Activated CD4-positive, alpha-beta T cell treated with anti-CD3 and anti-CD28 coated beads for 36 hours (primary cell): ENCODE measurements at regions of chr4 and their contacts with region 1.

Region 1: GRCh38 chr4:113761620-113762185 is at the start of gene CAMK2D:
- DNase-seq: peak; percentile 93
- ATAC-seq: peak; percentile 62
- H3K4me3 Mint-ChIP-seq: peak within 1 kb of the TSS; percentile 97
- H3K27ac Mint-ChIP-seq: peak within 1 kb of the TSS; percentile 98
- H3K4me1 Mint-ChIP-seq: peaks cover 46% of the 10 kb centered on the region
- H3K27me3 Mint-ChIP-seq: no peaks in the 10 kb centered on the region
- total RNA-seq, gene CAMK2D: 70.3 to 71.3 TPM

Region 2: DNA sequence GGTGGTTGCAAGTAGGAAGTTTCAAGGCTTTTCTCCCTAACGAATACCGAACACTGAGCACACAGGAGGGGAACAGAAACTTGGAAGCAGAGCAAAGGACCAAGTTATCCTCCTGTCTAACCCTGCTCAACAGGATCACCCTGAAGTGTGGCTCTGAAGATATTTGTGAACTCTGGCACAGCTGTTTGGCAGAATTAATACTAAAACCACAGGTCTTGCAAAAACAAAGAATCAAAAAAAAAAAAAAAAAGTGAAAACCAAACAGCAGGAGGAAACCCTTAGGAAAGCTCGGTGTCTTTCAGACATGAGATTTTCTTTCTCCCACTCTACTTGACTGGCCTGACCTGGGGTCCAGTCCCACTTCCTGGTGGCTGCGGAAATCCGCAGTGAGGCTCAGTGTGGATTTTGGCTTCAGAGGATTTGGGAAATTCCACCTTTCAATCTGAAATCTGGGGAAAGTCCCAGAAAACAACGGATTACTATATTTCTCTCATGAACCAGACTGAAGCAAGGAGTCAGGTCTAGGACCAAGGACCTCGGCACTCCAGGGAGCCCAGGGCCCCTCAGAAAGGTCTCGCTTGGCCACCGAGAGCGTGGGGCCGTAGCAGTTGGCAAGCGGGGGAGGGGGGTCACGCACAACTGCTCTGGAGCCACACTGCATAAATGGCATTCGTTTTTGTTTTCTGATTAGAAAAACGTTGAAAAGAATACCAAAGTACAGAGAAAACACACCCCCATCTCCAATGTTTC is 1476.9 kb before region 1 on chr4:
- CTCF ChIA-PET with region 1: no interaction called
- POLR2A ChIA-PET with region 1: no interaction called
- intact Hi-C with region 1: loop called in 1 of 2 experiments (anchors 10 kb)
- DNase-seq: peak; percentile 43
- ATAC-seq: no peak
- H3K4me3 Mint-ChIP-seq: peak overlapping the region; percentile 96
- H3K27ac Mint-ChIP-seq: peak overlapping the region; percentile 96
- H3K4me1 Mint-ChIP-seq: peaks cover 73% of the 10 kb centered on the region
- H3K27me3 Mint-ChIP-seq: no peaks in the 10 kb centered on the region

Region 3: GRCh38 chr4:113384600-113384999 is 377.1 kb before region 1 on chr4:
- CTCF ChIA-PET with region 1: no interaction called
- POLR2A ChIA-PET with region 1: no interaction called
- intact Hi-C with region 1: loop called in 1 of 2 experiments (anchors 2 kb)
- DNase-seq: peak; percentile 16
- ATAC-seq: peak; percentile 98
- H3K4me3 Mint-ChIP-seq: no peak overlapping the region
- H3K27ac Mint-ChIP-seq: peak overlapping the region; percentile 47
- H3K4me1 Mint-ChIP-seq: peaks cover 22% of the 10 kb centered on the region
- H3K27me3 Mint-ChIP-seq: peaks cover 2% of the 10 kb centered on the region

Region 4: DNA sequence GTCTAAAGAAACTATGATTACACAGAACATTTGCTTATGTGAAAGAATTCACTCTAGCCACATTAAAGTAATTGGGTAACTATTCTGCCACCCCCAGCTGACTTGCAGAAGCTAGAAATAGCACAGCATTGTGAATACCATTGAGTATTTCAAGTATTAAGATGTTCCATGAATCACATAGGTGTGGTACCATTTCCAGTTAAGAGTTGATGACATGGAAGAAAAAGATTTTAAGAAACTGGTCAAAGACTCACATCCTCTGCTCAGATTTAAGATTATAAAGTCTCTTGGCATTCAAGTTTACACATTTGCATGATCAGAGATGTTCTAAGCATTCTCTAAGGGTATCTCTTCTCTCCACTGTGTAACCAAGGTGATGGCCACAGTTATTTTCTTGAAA is 287.7 kb before region 1 on chr4:
- CTCF ChIA-PET with region 1: no interaction called
- POLR2A ChIA-PET with region 1: no interaction called
- intact Hi-C with region 1: loop called (anchors 1 kb)
- DNase-seq: peak; percentile 47
- ATAC-seq: peak; percentile 76
- H3K4me3 Mint-ChIP-seq: no peak overlapping the region
- H3K27ac Mint-ChIP-seq: peak overlapping the region; percentile 88
- H3K4me1 Mint-ChIP-seq: peaks cover 66% of the 10 kb centered on the region
- H3K27me3 Mint-ChIP-seq: no peaks in the 10 kb centered on the region

Region 5: GRCh38 chr4:113499696-113500095 is 262.0 kb before region 1 on chr4:
- CTCF ChIA-PET with region 1: no interaction called
- POLR2A ChIA-PET with region 1: no interaction called
- intact Hi-C with region 1: no loop called
- DNase-seq: no peak
- ATAC-seq: no peak
- H3K4me3 Mint-ChIP-seq: no peak overlapping the region
- H3K27ac Mint-ChIP-seq: no peak overlapping the region
- H3K4me1 Mint-ChIP-seq: no peaks in the 10 kb centered on the region
- H3K27me3 Mint-ChIP-seq: no peaks in the 10 kb centered on the region

Region 6: GRCh38 chr4:113636438-113636818 is 125.3 kb before region 1 on chr4:
- CTCF ChIA-PET with region 1: no interaction called
- POLR2A ChIA-PET with region 1: no interaction called
- intact Hi-C with region 1: loop called in 1 of 2 experiments (anchors 5 kb)
- DNase-seq: no peak
- ATAC-seq: peak; percentile 52
- H3K4me3 Mint-ChIP-seq: peak overlapping the region; percentile 29
- H3K27ac Mint-ChIP-seq: peak overlapping the region; percentile 72
- H3K4me1 Mint-ChIP-seq: peaks cover 49% of the 10 kb centered on the region
- H3K27me3 Mint-ChIP-seq: no peaks in the 10 kb centered on the region

Region 7: DNA sequence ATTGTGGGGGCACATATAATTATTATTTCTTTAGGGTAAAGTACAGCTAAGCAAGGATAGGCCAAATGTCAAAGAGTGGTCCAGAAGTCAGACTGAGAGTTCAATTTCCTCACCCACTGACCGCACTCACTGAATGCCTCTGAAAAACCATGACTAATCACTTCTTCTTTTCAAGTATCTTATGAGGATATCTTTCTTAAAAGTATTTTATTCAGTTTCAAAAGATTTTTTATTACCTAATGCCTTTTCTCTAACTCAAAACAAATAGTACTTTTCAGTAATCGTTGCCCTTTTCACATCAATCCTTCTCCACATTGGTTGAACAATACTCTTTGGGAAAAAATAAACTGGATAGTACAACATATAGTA is 61.6 kb after region 1 on chr4:
- CTCF ChIA-PET with region 1: no interaction called
- POLR2A ChIA-PET with region 1: no interaction called
- intact Hi-C with region 1: loop called (anchors 1 kb)
- DNase-seq: peak; percentile 12
- ATAC-seq: no peak
- H3K4me3 Mint-ChIP-seq: no peak overlapping the region
- H3K27ac Mint-ChIP-seq: peak overlapping the region; percentile 40
- H3K4me1 Mint-ChIP-seq: peaks cover 62% of the 10 kb centered on the region
- H3K27me3 Mint-ChIP-seq: no peaks in the 10 kb centered on the region

Region 8: GRCh38 chr4:113919145-113919544 is 157.4 kb after region 1 on chr4:
- CTCF ChIA-PET with region 1: no interaction called
- POLR2A ChIA-PET with region 1: no interaction called
- intact Hi-C with region 1: no loop called
- DNase-seq: no peak
- ATAC-seq: no peak
- H3K4me3 Mint-ChIP-seq: no peak overlapping the region
- H3K27ac Mint-ChIP-seq: no peak overlapping the region
- H3K4me1 Mint-ChIP-seq: peaks cover 5% of the 10 kb centered on the region
- H3K27me3 Mint-ChIP-seq: no peaks in the 10 kb centered on the region

Region 9: DNA sequence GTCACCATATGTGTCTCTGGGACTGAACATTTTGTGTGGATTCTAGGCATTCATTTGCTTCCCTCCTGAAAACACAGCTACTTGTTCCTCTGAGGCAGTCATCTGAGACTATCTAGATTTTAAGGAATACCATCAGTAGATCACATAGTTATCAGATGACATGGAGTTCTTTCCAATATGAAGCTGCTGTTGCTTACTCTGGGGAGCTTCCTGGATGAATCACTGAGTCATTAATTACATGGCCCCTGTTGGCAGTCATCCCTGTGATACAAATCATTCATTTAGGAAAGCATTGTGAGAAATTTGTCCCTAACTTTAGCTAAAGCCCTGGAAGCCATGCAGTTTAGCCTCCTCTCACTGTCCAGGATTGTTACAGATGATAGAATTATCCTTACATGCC is 315.9 kb after region 1 on chr4:
- CTCF ChIA-PET with region 1: no interaction called
- POLR2A ChIA-PET with region 1: no interaction called
- intact Hi-C with region 1: loop called (anchors 5 to 10 kb)
- DNase-seq: no peak
- ATAC-seq: no peak
- H3K4me3 Mint-ChIP-seq: no peak overlapping the region
- H3K27ac Mint-ChIP-seq: no peak overlapping the region
- H3K4me1 Mint-ChIP-seq: no peaks in the 10 kb centered on the region
- H3K27me3 Mint-ChIP-seq: peaks cover 6% of the 10 kb centered on the region